A549 (cell line): ENCODE measurements at regions of chr2 and their contacts with region 1.

Region 1: GRCh38 chr2:20446917-20447436 is at the start of gene RHOB:
- DNase-seq: peak; percentile 99
- ATAC-seq: peak; percentile 76 to 85
- H3K4me3 ChIP-seq: peak within 1 kb of the TSS; percentile 90
- H3K27ac ChIP-seq: peak within 1 kb of the TSS; percentile 95 to 98
- H3K4me1 ChIP-seq: peaks cover 52% of the 10 kb centered on the region
- CTCF ChIP-seq: no peak
- EP300 ChIP-seq: no peak
- POLR2A ChIP-seq: peak; percentile 99
- RAD21 ChIP-seq: no peak; a peak in 1 of 5 replicates
- polyA plus RNA-seq, gene RHOB: 110 and 157 TPM in 2 replicates

Region 2: GRCh38 chr2:20350041-20350712 is 96.8 kb before region 1 on chr2:
- CTCF ChIA-PET with region 1: interaction called, 4 read pairs
- POLR2A ChIA-PET with region 1: interaction called, 12 read pairs
- DNase-seq: peak in 1 of 2 experiments; percentile 41
- ATAC-seq: peak; percentile 60 to 77
- H3K4me3 ChIP-seq: peak overlapping the region; percentile 84
- H3K27ac ChIP-seq: peak overlapping the region; percentile 99
- H3K4me1 ChIP-seq: peaks cover 43% of the 10 kb centered on the region
- CTCF ChIP-seq: no peak
- EP300 ChIP-seq: no peak; a peak in 1 of 5 replicates
- POLR2A ChIP-seq: peak; percentile 34; the same call in 1 of the 2 replicates
- RAD21 ChIP-seq: no peak

Region 3: DNA sequence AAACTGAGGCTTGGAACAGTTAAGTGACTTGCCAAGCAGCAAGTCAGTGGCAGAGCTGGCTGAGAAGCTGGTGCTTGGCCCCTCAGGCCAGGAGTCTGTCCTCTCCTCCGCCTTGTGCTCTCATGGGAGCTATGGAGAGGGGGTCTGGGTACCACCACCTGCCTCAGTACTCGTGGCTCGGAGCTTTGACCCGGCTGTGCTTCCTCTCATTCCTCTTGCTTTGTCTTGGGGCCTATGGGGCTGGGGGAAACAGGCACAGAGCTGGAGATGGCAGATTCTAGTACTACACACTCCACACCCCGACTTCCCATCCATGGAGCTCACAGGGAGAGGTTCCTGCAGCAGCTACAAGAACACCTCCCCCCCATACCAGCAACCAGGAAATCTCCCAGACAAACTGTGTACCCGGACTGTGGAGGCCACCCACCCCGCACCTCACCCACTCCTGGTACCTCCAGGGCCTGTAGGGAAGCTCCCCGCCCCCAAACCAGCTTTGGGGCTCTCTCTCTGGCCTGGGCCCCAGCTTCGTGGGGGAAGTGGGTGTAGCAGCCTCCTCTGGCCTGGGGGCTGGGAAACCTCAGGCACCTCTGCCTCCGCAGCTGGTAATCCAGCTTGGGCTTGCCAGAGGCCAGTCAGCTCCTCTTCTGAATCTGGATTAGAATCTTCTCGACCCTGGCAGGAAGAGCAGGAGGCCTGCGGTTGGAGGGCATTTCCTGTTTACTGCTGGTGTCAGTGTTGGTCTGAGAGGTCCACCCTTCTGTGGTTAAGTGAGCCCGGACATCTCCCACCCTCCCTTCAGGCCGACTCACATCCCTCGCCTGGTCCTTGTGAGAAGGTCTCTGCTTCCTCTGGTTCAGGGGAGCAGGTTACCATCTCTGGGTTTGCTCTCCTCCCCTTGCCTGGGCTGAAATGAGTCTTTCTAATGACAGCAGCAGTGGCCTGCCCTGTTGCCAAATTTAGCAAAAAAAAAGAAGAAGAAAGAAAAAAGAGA is 22.4 kb before region 1 on chr2:
- CTCF ChIA-PET with region 1: interaction called, 87 read pairs
- POLR2A ChIA-PET with region 1: interaction called, 33 read pairs
- DNase-seq: no peak
- ATAC-seq: 0 out of 6 replicates have a peak, but pooled peaks of 1 of the 2 experiments have one; percentile 10
- H3K4me3 ChIP-seq: no peak overlapping the region
- H3K27ac ChIP-seq: peak overlapping the region in 1 of 2 experiments; percentile 3; a peak in 1 of 6 replicates
- H3K4me1 ChIP-seq: 0 out of 3 replicates have a peak, but pooled peaks cover 2% of the 10 kb centered on the region
- CTCF ChIP-seq: no peak
- EP300 ChIP-seq: no peak
- POLR2A ChIP-seq: no peak
- RAD21 ChIP-seq: no peak

Region 4: GRCh38 chr2:20478970-20479369 is 32.0 kb after region 1 on chr2:
- CTCF ChIA-PET with region 1: interaction called, 5 read pairs
- POLR2A ChIA-PET with region 1: interaction called, 12 read pairs
- DNase-seq: no peak
- ATAC-seq: no peak
- H3K4me3 ChIP-seq: no peak overlapping the region
- H3K27ac ChIP-seq: no peak overlapping the region
- H3K4me1 ChIP-seq: 0 out of 3 replicates have a peak, but pooled peaks cover 4% of the 10 kb centered on the region
- CTCF ChIP-seq: no peak
- EP300 ChIP-seq: no peak
- POLR2A ChIP-seq: no peak
- RAD21 ChIP-seq: no peak

Region 5: DNA sequence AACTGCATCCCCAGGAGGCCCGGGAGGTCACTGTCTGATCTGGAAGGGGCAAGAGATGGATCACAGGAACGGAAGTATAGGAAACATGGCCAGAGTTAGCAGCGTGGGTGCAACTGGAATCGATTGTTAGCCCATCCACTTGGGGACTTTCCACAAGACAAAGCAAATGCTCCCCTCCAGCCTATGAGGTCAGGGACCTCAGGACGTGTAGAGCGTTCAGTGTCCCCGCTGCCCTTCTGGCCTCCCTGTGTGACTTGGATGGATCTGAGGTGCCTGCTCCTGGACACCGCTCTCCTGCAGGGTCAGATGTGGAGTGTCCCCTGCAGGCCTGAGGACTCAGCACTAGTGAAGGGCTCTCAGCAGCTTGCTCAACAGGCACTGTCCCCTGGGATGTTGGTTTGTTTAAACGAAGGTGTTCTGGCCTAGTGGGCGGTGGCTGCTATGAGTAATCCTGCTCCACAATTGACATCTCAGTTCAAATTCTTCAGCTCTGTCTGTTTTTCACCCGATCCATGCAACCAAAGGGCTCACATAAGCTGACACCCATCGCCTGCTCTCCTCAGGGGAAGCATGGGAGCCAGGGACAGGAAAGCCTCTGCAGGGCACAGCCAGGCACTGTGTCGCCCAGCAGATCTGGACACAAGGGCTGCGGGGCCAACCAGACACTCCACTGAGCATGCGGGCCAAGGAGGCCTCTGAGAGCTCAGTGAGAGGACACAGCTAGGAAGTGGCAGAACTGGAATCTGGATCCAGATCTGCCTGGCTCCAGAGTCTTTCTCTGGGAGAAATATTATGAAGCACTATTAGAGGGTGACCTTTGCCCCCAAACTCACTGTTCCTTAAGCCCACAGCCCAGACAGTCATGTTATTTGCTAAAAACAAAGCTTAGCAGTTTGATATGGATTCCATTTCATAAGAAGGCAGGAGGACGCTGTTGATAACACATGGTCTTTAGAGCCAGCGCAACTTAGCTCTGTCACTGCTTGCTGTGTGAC is 78.4 kb after region 1 on chr2:
- CTCF ChIA-PET with region 1: interaction called, 3 read pairs
- POLR2A ChIA-PET with region 1: interaction called, 24 read pairs
- DNase-seq: peak in 1 of 2 experiments; percentile 55
- ATAC-seq: peak; percentile 72 to 79
- H3K4me3 ChIP-seq: no peak overlapping the region
- H3K27ac ChIP-seq: peak overlapping the region; percentile 50 to 57; a peak in 4 of 6 replicates
- H3K4me1 ChIP-seq: peaks cover 19% of the 10 kb centered on the region
- CTCF ChIP-seq: no peak
- EP300 ChIP-seq: no peak
- POLR2A ChIP-seq: no peak
- RAD21 ChIP-seq: no peak

Region 6: DNA sequence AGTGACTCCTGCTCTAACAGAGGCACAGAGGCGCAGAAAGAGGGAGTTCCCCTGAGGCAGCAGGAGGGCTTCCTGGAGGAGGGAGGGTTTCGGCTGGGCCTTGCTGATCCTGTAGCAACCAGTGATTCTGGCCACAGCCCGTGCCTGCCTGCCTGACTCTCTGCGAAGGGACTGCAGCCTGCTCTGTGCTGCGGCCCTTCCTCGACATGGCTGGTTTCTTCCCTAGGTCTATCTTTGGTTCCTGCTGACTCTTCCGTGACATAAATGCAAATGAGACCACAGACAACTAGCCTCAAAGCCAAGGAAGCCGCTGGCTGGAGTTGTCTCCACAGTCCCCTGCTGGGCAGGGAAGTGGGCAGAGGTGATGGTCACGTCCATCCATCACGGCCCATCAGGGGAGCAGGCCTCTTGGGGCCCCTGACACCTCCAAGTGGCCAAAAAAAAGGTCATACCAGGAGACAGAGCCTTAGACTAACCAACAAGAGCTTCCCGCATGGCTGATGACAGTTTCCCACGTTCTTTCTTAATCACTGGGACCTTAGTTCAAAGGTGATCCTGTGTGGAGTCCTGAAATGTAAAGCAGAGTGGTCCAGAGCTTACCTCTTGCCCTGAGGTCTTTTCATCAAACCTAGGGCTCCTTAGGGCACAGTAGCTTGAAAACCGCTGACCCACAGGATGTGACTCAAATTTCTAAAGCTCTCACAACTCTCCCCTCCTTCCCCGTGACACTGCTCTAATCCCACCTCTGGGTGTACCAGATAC is 148.6 kb after region 1 on chr2:
- CTCF ChIA-PET with region 1: interaction called, 10 read pairs
- POLR2A ChIA-PET with region 1: interaction called, 51 read pairs
- DNase-seq: no peak
- ATAC-seq: no peak
- H3K4me3 ChIP-seq: no peak overlapping the region
- H3K27ac ChIP-seq: peak overlapping the region; percentile 75 to 89; a peak in 4 of 6 replicates
- H3K4me1 ChIP-seq: peaks cover 55% of the 10 kb centered on the region
- CTCF ChIP-seq: no peak
- EP300 ChIP-seq: no peak
- POLR2A ChIP-seq: no peak
- RAD21 ChIP-seq: no peak

Region 7: GRCh38 chr2:20635675-20636584 is 189.0 kb after region 1 on chr2:
- CTCF ChIA-PET with region 1: interaction called, 210 read pairs
- POLR2A ChIA-PET with region 1: interaction called, 102 read pairs
- DNase-seq: peak; percentile 78 to 87
- ATAC-seq: peak; percentile 90 to 98
- H3K4me3 ChIP-seq: no peak overlapping the region
- H3K27ac ChIP-seq: peak overlapping the region; percentile 50 to 75; a peak in 4 of 6 replicates
- H3K4me1 ChIP-seq: peaks cover 21% of the 10 kb centered on the region
- CTCF ChIP-seq: peak; percentile 97
- EP300 ChIP-seq: no peak
- POLR2A ChIP-seq: no peak
- RAD21 ChIP-seq: peak; percentile 100